B cell (primary cell): ENCODE measurements at regions of chr2 and their contacts with region 1.

Region 1: GRCh38 chr2:130332271-130333073 is 10.2 kb upstream of the IMP4 start:
- DNase-seq: peak; percentile 75
- ATAC-seq: peak; percentile 86
- H3K4me3 ChIP-seq: peak overlapping the region in 1 of 5 experiments; percentile 4
- H3K4me3 Mint-ChIP-seq: peak overlapping the region; percentile 26
- H3K27ac ChIP-seq: no peak overlapping the region
- H3K27ac Mint-ChIP-seq: no peak overlapping the region
- H3K4me1 ChIP-seq: peaks cover 4 to 7% of the 10 kb centered on the region in 2 donors
- H3K4me1 Mint-ChIP-seq: peaks cover 6% of the 10 kb centered on the region
- H3K27me3 ChIP-seq: peaks cover 0 to 16% (median 4%) of the 10 kb centered on the region in 4 experiments
- H3K27me3 Mint-ChIP-seq: peaks cover 25% of the 10 kb centered on the region
- CTCF ChIP-seq: peak; percentile 98

Region 2: DNA sequence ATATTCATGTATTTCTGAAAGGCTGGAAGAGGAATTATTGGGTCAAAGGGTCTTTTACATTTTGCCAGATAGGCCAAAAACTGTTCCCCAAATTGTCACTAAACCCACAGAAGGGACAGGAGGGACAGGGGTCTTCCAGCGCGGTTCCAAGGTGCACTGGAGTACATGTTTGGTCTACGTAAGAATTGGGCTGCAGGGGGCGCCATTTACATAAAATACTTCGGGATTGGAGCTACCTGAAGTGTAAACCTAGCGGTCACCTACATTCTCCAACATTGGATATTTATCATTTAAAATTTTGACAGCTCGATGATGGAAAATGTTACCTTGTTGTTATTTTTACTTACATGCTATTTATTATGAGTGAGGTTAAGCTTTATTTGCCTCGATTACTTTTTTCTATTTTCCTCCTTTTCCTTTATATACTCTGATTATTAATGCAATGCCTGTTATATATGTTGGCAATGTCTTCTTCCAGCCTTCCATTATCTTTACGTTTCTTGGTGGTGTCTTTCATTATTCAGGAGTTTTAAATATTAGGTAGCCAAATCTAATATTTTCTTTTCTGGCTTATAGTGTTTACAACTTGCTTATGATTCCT is 396.0 kb before region 1 on chr2:
- CTCF ChIA-PET with region 1: interaction called, 145 read pairs
- POLR2A ChIA-PET with region 1: no interaction called
- intact Hi-C with region 1: no loop called
- DNase-seq: peak; percentile 62
- ATAC-seq: peak; percentile 63
- H3K4me3 ChIP-seq: no peak overlapping the region
- H3K4me3 Mint-ChIP-seq: no peak overlapping the region
- H3K27ac ChIP-seq: no peak overlapping the region
- H3K27ac Mint-ChIP-seq: no peak overlapping the region
- H3K4me1 ChIP-seq: no peaks in the 10 kb centered on the region
- H3K4me1 Mint-ChIP-seq: no peaks in the 10 kb centered on the region
- H3K27me3 ChIP-seq: peaks cover 0 to 5% (median 0%) of the 10 kb centered on the region in 4 experiments
- H3K27me3 Mint-ChIP-seq: peaks cover 42% of the 10 kb centered on the region
- CTCF ChIP-seq: peak; percentile 82

Region 3: DNA sequence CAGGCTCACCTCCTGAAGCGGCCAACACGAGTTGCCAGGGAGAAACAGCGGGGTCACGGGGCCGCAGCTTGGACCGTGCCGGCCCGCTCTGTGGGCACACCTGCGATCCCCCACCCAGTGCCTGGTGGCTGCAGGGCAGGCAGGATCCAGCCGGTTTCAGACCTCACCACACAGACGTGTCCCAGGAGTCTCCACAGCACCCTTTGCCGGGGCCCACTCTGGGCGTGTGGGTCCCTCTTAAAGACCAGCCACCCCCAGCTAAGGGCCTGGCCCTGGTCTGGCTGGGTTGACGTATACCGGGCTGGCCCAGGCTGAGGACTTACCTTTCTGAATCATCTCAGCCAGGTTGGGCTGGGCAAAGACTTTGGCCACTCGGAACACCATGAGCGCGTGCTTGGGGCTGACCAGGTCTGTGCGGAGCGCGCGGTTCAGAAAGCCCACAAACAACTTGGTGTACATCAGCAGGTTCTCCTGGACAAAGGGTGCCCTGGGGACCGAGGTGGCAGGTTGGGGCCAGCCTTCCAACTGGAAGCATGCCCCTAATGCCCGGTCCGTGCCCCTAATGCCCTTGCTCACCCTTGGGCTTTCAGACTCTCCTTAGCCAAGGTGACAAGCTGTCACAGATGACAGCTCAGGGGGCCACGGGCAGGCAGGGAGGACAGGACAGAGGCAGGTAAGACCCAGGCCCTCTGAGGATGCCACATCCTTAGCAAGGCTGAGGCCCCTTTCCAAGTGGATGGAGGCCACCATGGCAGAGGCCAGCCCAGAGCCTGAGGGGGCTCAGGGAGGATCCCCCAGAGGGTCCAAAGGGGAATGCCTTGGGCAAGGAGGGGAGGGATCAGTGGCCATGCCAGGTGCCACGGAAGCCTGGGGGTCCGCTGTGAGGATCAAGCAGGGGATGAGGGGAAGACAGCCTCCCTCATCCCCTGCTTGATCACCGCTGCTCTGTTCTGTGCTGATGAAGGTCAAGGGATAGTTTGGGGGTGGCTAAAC is 177.4 kb before region 1 on chr2:
- CTCF ChIA-PET with region 1: interaction called, 13 read pairs
- POLR2A ChIA-PET with region 1: no interaction called
- intact Hi-C with region 1: no loop called
- DNase-seq: no peak
- ATAC-seq: no peak
- H3K4me3 ChIP-seq: no peak overlapping the region
- H3K4me3 Mint-ChIP-seq: no peak overlapping the region
- H3K27ac ChIP-seq: no peak overlapping the region
- H3K27ac Mint-ChIP-seq: peak overlapping the region; percentile 46
- H3K4me1 ChIP-seq: peaks cover 24 to 32% of the 10 kb centered on the region in 2 donors
- H3K4me1 Mint-ChIP-seq: peaks cover 30% of the 10 kb centered on the region
- H3K27me3 ChIP-seq: no peaks in the 10 kb centered on the region
- H3K27me3 Mint-ChIP-seq: no peaks in the 10 kb centered on the region
- CTCF ChIP-seq: no peak

Region 4: DNA sequence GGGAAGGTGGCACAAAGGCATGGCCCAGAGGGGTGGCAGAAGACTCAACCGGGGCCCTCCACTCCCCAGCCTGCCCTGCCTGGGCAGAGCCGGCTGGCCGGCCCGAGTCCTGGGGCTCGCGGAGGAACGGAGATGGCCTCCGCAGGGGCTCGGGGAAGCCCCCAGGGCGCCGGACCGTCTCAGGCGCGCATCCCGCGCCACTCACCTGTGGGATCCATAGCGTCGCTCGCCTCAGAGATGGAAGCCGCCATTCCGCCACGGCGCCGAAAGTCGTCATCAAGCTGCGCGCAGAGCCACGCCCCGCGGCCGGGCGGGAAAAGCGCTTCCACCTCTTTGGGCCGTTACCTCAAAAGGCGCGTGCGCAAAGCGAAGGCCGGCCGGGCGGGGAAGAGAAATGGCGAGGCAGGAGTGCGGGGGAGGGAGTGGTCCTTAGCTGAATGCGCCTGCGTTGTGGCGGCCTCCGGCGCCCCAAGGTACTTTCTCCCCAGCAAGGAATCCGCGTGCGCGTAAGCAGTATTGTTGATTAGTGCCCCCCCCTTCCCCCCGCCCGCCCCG is 151.1 kb before region 1 on chr2 and contains the start of gene SMPD4:
- CTCF ChIA-PET with region 1: interaction called, 18 read pairs
- POLR2A ChIA-PET with region 1: no interaction called
- intact Hi-C with region 1: loop called (anchors 2 kb)
- DNase-seq: peak; percentile 98
- ATAC-seq: peak; percentile 72
- H3K4me3 ChIP-seq: peak within 1 kb of the TSS; percentile 38 to 90 (median 80)
- H3K4me3 Mint-ChIP-seq: peak within 1 kb of the TSS; percentile 92
- H3K27ac ChIP-seq: peak within 1 kb of the TSS; percentile 85 to 91
- H3K27ac Mint-ChIP-seq: peak within 1 kb of the TSS; percentile 97
- H3K4me1 ChIP-seq: peaks cover 14 to 21% of the 10 kb centered on the region in 2 donors
- H3K4me1 Mint-ChIP-seq: peaks cover 24% of the 10 kb centered on the region
- H3K27me3 ChIP-seq: no peaks in the 10 kb centered on the region
- H3K27me3 Mint-ChIP-seq: no peaks in the 10 kb centered on the region
- CTCF ChIP-seq: no peak
- total RNA-seq, gene SMPD4: 63.8 and 67.5 TPM in 2 replicates

Region 5: GRCh38 chr2:130261970-130262760 is 70.3 kb before region 1 on chr2:
- CTCF ChIA-PET with region 1: no interaction called
- POLR2A ChIA-PET with region 1: no interaction called
- intact Hi-C with region 1: no loop called
- DNase-seq: no peak
- ATAC-seq: no peak
- H3K4me3 ChIP-seq: no peak overlapping the region
- H3K4me3 Mint-ChIP-seq: no peak overlapping the region
- H3K27ac ChIP-seq: no peak overlapping the region
- H3K27ac Mint-ChIP-seq: no peak overlapping the region
- H3K4me1 ChIP-seq: no peaks in the 10 kb centered on the region
- H3K4me1 Mint-ChIP-seq: no peaks in the 10 kb centered on the region
- H3K27me3 ChIP-seq: peaks cover 0 to 9% (median 1%) of the 10 kb centered on the region in 4 experiments
- H3K27me3 Mint-ChIP-seq: peaks cover 33% of the 10 kb centered on the region
- CTCF ChIP-seq: no peak